Activated T-helper 2 cell treated with anti-CD3 and anti-CD28 coated beads, Interferon-gamma antibody, Interleukin-2, Interleukin-4, amounts not matched to agents 10 μg/mL and 5 μg/mL and 100 μg/mL, durations not matched to agents 14 hours and 24 hours and 36 hours (primary cell): ENCODE measurements at regions of chr3 and their contacts with region 1.

Region 1: GRCh38 chr3:155870133-155870944 is at the start of gene GMPS:
- DNase-seq: peak; percentile 97
- H3K4me3 Mint-ChIP-seq: peak within 1 kb of the TSS; percentile 91
- H3K27ac Mint-ChIP-seq: peak within 1 kb of the TSS; percentile 95
- H3K4me1 Mint-ChIP-seq: peaks cover 16% of the 10 kb centered on the region
- H3K27me3 Mint-ChIP-seq: no peaks in the 10 kb centered on the region
- total RNA-seq, gene GMPS: 135 and 136 TPM in 2 replicates

Region 2: DNA sequence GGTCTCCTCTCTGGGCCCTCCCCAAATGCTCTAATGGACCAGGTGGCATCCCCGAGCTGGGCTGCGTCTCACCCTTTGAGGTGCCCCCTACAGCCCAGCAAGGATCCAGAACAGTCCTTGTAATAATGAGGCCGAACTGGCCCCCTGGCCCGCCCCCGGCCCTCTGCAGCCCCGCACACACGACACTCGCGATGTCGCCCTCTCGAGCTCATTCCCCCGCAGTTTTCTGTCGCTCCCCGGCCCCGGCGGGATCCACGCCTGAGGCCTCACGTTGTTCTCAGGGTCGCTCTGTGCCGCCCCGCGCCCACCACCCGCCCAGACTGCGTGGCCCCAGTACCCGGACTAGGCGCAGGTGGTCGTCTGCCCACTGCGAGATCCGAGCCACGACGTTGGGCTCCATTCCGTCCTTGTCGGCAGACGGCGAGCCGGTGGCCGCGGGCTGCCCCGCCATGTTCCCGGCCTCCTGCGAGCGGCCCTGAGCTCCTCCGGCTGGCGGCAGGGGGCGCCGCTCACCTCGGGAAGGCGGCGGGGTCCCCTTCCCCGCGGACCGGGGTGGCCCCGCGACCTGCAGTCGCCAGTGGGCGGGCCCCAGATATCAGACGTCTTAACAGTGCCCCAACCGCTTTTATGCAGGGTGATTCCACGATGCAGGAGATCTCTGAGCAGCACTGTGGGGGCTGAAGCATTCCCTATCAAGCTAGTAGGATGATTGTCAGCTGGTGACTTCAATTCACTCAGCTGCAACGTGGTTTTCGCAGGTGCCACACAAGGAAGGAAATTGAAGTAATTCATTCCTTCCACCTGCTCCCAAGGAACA is 64.3 kb before region 1 on chr3 and contains the start of gene C3orf33:
- intact Hi-C with region 1: loop called (anchors 1 kb)
- DNase-seq: peak; percentile 70
- H3K4me3 Mint-ChIP-seq: peak within 1 kb of the TSS; percentile 85
- H3K27ac Mint-ChIP-seq: peak within 1 kb of the TSS; percentile 70
- H3K4me1 Mint-ChIP-seq: peaks cover 4% of the 10 kb centered on the region
- H3K27me3 Mint-ChIP-seq: peaks cover 15% of the 10 kb centered on the region
- total RNA-seq, gene C3orf33: 1.7 and 2.1 TPM in 2 replicates

Region 3: DNA sequence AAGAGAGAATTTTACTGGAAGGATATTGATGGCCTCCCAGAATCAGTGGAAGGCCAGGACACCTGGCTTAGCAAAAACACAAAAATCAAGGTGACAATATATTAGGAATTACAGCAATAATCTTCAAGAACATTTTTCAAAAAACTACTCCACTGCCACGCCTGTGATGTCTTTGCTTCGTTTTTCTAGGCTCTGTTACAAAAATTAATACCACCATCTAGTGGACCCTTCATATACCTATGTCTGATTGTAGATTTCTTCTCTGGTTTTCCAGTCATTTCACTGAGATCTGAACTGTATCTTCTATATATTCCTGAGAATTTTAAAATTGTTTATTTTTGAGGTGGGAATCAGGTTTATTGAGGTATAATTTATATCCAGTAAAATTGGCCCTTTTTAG is 10.5 kb before region 1 on chr3:
- intact Hi-C with region 1: loop called (anchors 1 kb)
- DNase-seq: no peak
- H3K4me3 Mint-ChIP-seq: no peak overlapping the region
- H3K27ac Mint-ChIP-seq: no peak overlapping the region
- H3K4me1 Mint-ChIP-seq: peaks cover 36% of the 10 kb centered on the region
- H3K27me3 Mint-ChIP-seq: no peaks in the 10 kb centered on the region

Region 4: GRCh38 chr3:155886915-155887314 is 16.6 kb after region 1 on chr3:
- intact Hi-C with region 1: loop called (anchors 2 kb)
- DNase-seq: no peak
- H3K4me3 Mint-ChIP-seq: no peak overlapping the region
- H3K27ac Mint-ChIP-seq: peak overlapping the region; percentile 67
- H3K4me1 Mint-ChIP-seq: peaks cover 40% of the 10 kb centered on the region
- H3K27me3 Mint-ChIP-seq: no peaks in the 10 kb centered on the region